SK-N-SH (cell line): ENCODE measurements at regions of chr3 and their contacts with region 1.

Region 1: DNA sequence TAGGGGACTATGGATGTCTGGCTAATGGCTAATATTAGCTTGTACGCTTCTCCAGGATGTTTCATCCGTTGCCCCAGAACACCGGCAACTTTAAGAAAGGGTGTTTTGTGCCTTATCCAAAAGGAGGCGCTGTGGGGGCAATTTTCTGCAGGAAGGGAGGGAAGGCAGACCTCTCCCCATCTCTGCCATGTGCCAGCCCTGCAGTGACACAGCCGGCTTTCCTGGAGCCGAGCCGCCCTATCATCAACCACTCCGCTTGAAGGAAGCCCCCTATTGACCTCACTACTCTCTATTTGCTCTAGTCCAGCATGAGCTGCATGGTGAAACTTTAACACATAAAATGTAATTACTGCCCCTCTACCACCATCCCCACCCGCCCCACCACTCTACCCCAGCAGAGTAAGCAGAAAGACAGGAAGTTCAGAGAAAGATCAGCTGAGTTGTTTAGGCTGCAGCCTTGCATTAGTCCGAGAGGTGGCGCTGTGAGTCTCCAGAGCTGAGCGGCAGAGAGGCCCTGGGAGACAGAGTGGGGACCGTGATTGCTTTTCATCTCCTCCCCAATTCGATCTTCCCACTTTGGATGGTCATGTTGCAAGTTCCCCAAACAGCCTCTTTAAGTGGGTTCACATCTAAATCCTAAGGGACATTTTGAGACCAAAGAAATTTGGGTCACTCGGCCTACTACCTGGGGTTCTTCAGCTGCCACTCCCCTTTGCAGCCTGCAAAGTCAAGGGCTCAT is 24.5 kb upstream of the RAD18 start:
- DNase-seq: peak; percentile 91
- H3K4me3 ChIP-seq: no peak overlapping the region; a peak in 1 of 4 replicates
- H3K27ac ChIP-seq: no peak overlapping the region
- H3K4me1 ChIP-seq: peaks cover 0 to 4% of the 10 kb centered on the region in 2 experiments; a peak in 1 of 4 replicates
- H3K27me3 ChIP-seq: no peaks in the 10 kb centered on the region
- CTCF ChIP-seq: peak; percentile 74
- EP300 ChIP-seq: no peak
- RAD21 ChIP-seq: peak; percentile 85

Region 2: GRCh38 chr3:8964436-8965370 is 23.1 kb before region 1 on chr3:
- CTCF ChIA-PET with region 1: interaction called, 151 read pairs
- POLR2A ChIA-PET with region 1: no interaction called
- DNase-seq: no peak
- H3K4me3 ChIP-seq: no peak overlapping the region
- H3K27ac ChIP-seq: peak overlapping the region in 1 of 2 experiments; percentile 77; a peak in 2 of 4 replicates
- H3K4me1 ChIP-seq: peaks cover 11 to 17% of the 10 kb centered on the region in 2 experiments; a peak in 3 of 4 replicates
- H3K27me3 ChIP-seq: no peaks in the 10 kb centered on the region
- CTCF ChIP-seq: no peak
- EP300 ChIP-seq: no peak; a peak in 1 of 4 replicates
- RAD21 ChIP-seq: no peak

Region 3: GRCh38 chr3:9013782-9014563 is 26.2 kb after region 1 on chr3:
- CTCF ChIA-PET with region 1: interaction called, 16 read pairs
- POLR2A ChIA-PET with region 1: no interaction called
- DNase-seq: no peak
- H3K4me3 ChIP-seq: no peak overlapping the region
- H3K27ac ChIP-seq: no peak overlapping the region
- H3K4me1 ChIP-seq: no peaks in the 10 kb centered on the region; a peak in 1 of 4 replicates
- H3K27me3 ChIP-seq: no peaks in the 10 kb centered on the region
- CTCF ChIP-seq: 0 out of 2 replicates have a peak, but pooled peaks have one; percentile 11
- EP300 ChIP-seq: no peak
- RAD21 ChIP-seq: no peak

Region 4: GRCh38 chr3:9056581-9056980 is 68.8 kb after region 1 on chr3:
- CTCF ChIA-PET with region 1: interaction called, 14 read pairs
- POLR2A ChIA-PET with region 1: no interaction called
- DNase-seq: no peak
- H3K4me3 ChIP-seq: no peak overlapping the region
- H3K27ac ChIP-seq: no peak overlapping the region
- H3K4me1 ChIP-seq: peaks cover 0 to 8% of the 10 kb centered on the region in 2 experiments; a peak in 1 of 4 replicates
- H3K27me3 ChIP-seq: no peaks in the 10 kb centered on the region; the same call in 1 of the 2 replicates
- CTCF ChIP-seq: no peak
- EP300 ChIP-seq: no peak
- RAD21 ChIP-seq: no peak

Region 5: GRCh38 chr3:9249273-9250192 is 261.7 kb after region 1 on chr3 and contains the start of gene SRGAP3:
- CTCF ChIA-PET with region 1: interaction called, 27 read pairs
- POLR2A ChIA-PET with region 1: no interaction called
- DNase-seq: peak; percentile 89
- H3K4me3 ChIP-seq: peak within 1 kb of the TSS; percentile 69 to 74
- H3K27ac ChIP-seq: peak within 1 kb of the TSS in 1 of 2 experiments; percentile 78; a peak in 2 of 4 replicates
- H3K4me1 ChIP-seq: peaks cover 0 to 34% of the 10 kb centered on the region in 2 experiments; a peak in 2 of 4 replicates
- H3K27me3 ChIP-seq: peaks cover 2% of the 10 kb centered on the region; the same call in 1 of the 2 replicates
- CTCF ChIP-seq: peak; percentile 39; the same call in 1 of the 2 replicates
- EP300 ChIP-seq: no peak
- RAD21 ChIP-seq: peak; percentile 53
- polyA plus RNA-seq, gene SRGAP3: 2.8 and 3.0 TPM in 2 replicates

Region 6: GRCh38 chr3:9330166-9330703 is 342.4 kb after region 1 on chr3:
- CTCF ChIA-PET with region 1: interaction called, 12 read pairs
- POLR2A ChIA-PET with region 1: no interaction called
- DNase-seq: no peak
- H3K4me3 ChIP-seq: no peak overlapping the region
- H3K27ac ChIP-seq: no peak overlapping the region
- H3K4me1 ChIP-seq: no peaks in the 10 kb centered on the region
- H3K27me3 ChIP-seq: no peaks in the 10 kb centered on the region
- CTCF ChIP-seq: no peak
- EP300 ChIP-seq: no peak
- RAD21 ChIP-seq: no peak